CD14-positive monocyte (primary cell): ENCODE measurements at regions of chr7 and their contacts with region 1.

Region 1: GRCh38 chr7:106870983-106871410 is 5.9 kb downstream of the PIK3CG start:
- DNase-seq: peak; percentile 80 to 92 (median 92)
- H3K4me3 ChIP-seq: peak overlapping the region; percentile 17 to 57 (median 21)
- H3K4me3 Mint-ChIP-seq: peak overlapping the region; percentile 60 to 76
- H3K27ac ChIP-seq: peak overlapping the region in 1 of 2 donors; percentile 88
- H3K27ac Mint-ChIP-seq: peak overlapping the region; percentile 88 to 98 (median 92)
- H3K4me1 ChIP-seq: peaks cover 65 to 86% of the 10 kb centered on the region in 2 donors
- H3K4me1 Mint-ChIP-seq: peaks cover 76% of the 10 kb centered on the region
- H3K27me3 ChIP-seq: no peaks in the 10 kb centered on the region
- H3K27me3 Mint-ChIP-seq: no peaks in the 10 kb centered on the region
- CTCF ChIP-seq: no peak

Region 2: DNA sequence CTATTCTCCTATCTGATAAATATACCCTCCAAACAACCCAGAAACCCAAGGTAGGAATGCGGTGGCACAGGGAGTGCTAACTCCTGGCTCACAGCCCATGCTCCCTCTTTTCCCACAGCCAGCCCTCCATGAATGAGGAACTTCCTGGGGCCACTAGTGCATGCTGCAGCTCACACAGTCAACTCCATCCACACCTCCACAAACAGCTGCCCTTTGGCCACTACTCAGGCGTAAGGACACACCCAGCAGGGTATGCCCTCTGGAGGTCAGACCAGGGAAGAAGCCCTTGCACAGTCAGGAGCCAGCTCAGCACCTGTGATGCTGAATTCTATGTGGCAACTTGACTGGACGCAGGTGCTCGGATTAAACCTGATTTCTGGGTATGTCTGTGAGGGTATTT is 91.1 kb before region 1 on chr7:
- intact Hi-C with region 1: loop called in 1 of 2 experiments (anchors 5 kb)
- DNase-seq: peak in 1 of 3 donors; percentile 7
- H3K4me3 ChIP-seq: no peak overlapping the region
- H3K4me3 Mint-ChIP-seq: no peak overlapping the region
- H3K27ac ChIP-seq: no peak overlapping the region
- H3K27ac Mint-ChIP-seq: no peak overlapping the region
- H3K4me1 ChIP-seq: peaks cover 0 to 4% of the 10 kb centered on the region in 2 donors
- H3K4me1 Mint-ChIP-seq: peaks cover 17% of the 10 kb centered on the region
- H3K27me3 ChIP-seq: no peaks in the 10 kb centered on the region
- H3K27me3 Mint-ChIP-seq: peaks cover 0 to 3% (median 1%) of the 10 kb centered on the region in 3 donors
- CTCF ChIP-seq: peak; percentile 9